ENCODE measurements at regions of chr6 and their contacts with region 1.

Region 1: GRCh38 chr6:169789982-169790927 is 38.8 kb downstream of the ERMARD start:
- DNase-seq: peak; percentile 35
- ATAC-seq: peak; percentile 96
- H3K4me3 ChIP-seq: peak overlapping the region; percentile 41 to 58
- H3K27ac ChIP-seq: no peak overlapping the region
- H3K4me1 ChIP-seq: peaks cover 0 to 16% of the 10 kb centered on the region in 2 experiments; a peak in 3 of 4 replicates
- H3K27me3 ChIP-seq: no peaks in the 10 kb centered on the region; the same call in 1 of the 2 replicates
- CTCF ChIP-seq: peak; percentile 94 to 97 (median 96)
- POLR2A ChIP-seq: no peak
- RAD21 ChIP-seq: peak; percentile 97

Region 2: DNA sequence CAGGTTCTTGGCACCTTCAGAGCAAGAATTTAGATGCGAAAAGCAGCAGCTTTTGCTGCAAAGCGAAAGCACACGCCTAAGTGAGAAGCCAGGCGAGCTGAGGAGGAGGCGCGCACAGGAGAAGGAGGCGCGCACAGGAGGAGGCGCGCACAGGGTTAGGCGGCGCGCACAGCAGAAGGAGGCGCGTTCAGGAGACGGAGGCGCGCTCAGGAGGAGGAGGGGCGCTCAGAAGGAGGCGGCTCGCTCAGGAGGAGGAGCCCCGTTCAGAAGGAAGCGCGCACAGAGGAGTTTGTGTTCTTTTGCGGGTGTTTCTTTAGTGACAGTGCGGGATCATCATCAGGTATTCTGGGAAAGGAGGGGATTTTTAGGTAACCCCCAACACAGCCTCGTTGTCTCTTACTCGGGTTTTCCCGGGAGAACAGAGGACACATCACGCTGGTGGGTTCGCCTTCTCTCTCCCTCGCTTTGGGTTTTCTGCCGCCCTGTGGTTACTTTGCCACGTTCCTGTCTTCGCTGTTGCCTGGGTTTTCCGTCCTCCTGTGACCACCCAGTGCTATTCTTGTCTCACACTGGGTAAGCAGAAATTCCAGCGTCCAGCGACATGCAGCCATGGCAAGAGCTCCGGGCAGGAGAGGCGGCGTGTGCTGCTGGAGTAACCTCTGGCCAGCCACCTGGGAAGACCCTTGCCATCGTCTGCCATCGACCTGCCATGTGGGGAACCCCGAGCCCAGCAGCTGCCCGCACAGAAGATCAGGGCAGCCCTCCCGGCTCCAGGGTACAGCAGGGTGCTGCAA is 135.5 kb before region 1 on chr6:
- CTCF ChIA-PET with region 1: no interaction called
- POLR2A ChIA-PET with region 1: no interaction called
- RAD21 ChIA-PET with region 1: no interaction called
- intact Hi-C with region 1: no loop called
- DNase-seq: no peak
- ATAC-seq: no peak
- H3K4me3 ChIP-seq: no peak overlapping the region
- H3K27ac ChIP-seq: no peak overlapping the region
- H3K4me1 ChIP-seq: no peaks in the 10 kb centered on the region
- H3K27me3 ChIP-seq: no peaks in the 10 kb centered on the region
- CTCF ChIP-seq: no peak
- POLR2A ChIP-seq: no peak
- RAD21 ChIP-seq: no peak

Region 3: DNA sequence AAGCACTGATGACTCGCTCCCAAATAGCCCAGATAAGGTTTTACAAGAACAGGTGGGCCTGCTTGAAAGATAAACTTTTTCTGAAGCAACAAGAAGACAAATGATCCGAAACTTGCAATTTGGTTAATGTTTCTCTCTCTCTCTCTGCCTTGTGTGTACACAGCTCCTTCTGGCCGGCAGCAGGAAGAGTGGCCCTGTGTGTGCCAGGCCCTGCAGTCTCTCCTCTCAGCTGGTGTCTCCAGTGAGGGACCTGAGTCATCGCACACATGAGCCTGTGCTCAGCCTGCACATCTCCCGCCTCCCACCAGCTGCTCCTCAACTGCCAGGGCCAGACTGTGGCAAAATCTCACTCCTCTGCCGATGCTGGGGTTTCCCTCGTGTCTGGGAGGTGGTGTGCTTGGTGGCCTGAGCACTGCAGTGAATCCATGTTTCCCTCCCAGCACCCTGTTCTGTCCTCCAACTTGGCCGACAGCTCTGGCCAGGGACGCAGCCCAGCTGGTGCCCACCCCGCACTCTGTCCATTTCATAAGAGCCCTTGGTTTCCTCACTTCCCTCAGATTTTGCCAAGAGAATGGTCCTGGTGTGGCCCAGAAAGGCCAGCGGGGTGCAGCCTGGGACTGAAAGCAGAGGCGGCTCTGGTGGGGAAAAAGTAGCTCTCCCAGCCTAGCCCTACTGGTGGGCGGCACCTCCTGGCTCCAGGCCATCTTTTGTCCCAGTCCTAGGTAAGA is 10.6 kb after region 1 on chr6:
- CTCF ChIA-PET with region 1: interaction called, 12 read pairs
- POLR2A ChIA-PET with region 1: no interaction called
- RAD21 ChIA-PET with region 1: no interaction called
- intact Hi-C with region 1: no loop called
- DNase-seq: peak; percentile 13
- ATAC-seq: peak; percentile 85
- H3K4me3 ChIP-seq: peak overlapping the region in 1 of 2 experiments; percentile 4; a peak in 1 of 4 replicates
- H3K27ac ChIP-seq: peak overlapping the region; percentile 6; the same call in 1 of the 2 replicates
- H3K4me1 ChIP-seq: peaks cover 12 to 15% of the 10 kb centered on the region in 2 experiments
- H3K27me3 ChIP-seq: peaks cover 24% of the 10 kb centered on the region; the same call in 1 of the 2 replicates
- CTCF ChIP-seq: no peak
- POLR2A ChIP-seq: no peak
- RAD21 ChIP-seq: no peak

Region 4: DNA sequence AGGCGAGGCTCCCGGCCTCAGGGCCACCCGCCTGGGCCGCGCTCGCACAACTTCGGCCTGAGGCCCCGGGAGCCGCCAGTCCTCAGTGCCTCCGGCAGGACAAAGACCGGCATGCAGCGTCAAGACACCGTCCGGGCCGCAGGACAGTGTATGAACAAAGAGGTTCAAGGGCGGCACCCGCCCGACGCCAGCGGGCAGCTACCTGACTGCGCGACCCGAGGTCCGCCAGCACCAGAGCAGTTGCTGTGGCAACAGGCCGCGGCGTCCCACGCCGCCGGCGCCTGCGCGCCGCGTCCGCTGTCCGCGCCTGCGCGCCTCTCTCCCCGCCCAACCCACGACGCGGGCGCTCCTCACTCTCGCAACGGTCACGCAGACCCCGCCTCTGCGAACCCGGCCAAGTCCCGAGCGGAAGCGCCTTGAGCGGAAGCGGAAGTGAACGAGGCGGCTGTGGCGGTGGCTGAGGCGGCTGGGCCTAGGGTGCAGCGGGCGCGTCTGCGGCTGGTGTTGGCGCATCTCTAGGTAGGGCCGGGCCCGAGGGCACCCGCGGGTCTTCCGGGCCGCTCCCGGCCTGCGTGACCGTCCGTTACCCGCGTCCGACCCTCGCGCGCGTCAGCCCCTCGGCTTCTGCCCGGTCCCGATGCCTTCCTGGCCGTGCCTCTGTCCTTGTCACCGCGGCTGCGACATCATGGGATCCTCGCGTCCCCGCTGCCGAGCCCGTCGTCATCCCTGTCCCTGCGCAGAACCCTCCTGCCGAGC is 516.2 kb after region 1 on chr6 and contains the start of gene FAM120B:
- CTCF ChIA-PET with region 1: no interaction called
- POLR2A ChIA-PET with region 1: no interaction called
- RAD21 ChIA-PET with region 1: no interaction called
- intact Hi-C with region 1: loop called (anchors 10 kb)
- DNase-seq: peak; percentile 86
- ATAC-seq: peak; percentile 94
- H3K4me3 ChIP-seq: peak within 1 kb of the TSS; percentile 98 to 99
- H3K27ac ChIP-seq: peak within 1 kb of the TSS; percentile 75
- H3K4me1 ChIP-seq: peaks cover 10 to 24% of the 10 kb centered on the region in 2 experiments
- H3K27me3 ChIP-seq: no peaks in the 10 kb centered on the region
- CTCF ChIP-seq: no peak
- POLR2A ChIP-seq: peak; percentile 65
- RAD21 ChIP-seq: no peak
- total RNA-seq, gene FAM120B: 25.2 TPM

Measured in HCT116 (cell line).